H1 (cell line): ENCODE measurements at regions of chrX and their contacts with region 1.

Region 1: GRCh38 chrX:101287402-101287801 is 3.7 kb downstream of the TAF7L start:
- DNase-seq: no peak
- H3K4me3 ChIP-seq: no peak overlapping the region
- H3K27ac ChIP-seq: no peak overlapping the region
- H3K4me1 ChIP-seq: no peaks in the 10 kb centered on the region
- H3K27me3 ChIP-seq: no peaks in the 10 kb centered on the region
- CTCF ChIP-seq: peak in 2 of 3 experiments; percentile 23 to 44; a peak in 2 of 4 replicates
- EP300 ChIP-seq: no peak
- POLR2A ChIP-seq: no peak
- RAD21 ChIP-seq: peak; percentile 46 to 58

Region 2: DNA sequence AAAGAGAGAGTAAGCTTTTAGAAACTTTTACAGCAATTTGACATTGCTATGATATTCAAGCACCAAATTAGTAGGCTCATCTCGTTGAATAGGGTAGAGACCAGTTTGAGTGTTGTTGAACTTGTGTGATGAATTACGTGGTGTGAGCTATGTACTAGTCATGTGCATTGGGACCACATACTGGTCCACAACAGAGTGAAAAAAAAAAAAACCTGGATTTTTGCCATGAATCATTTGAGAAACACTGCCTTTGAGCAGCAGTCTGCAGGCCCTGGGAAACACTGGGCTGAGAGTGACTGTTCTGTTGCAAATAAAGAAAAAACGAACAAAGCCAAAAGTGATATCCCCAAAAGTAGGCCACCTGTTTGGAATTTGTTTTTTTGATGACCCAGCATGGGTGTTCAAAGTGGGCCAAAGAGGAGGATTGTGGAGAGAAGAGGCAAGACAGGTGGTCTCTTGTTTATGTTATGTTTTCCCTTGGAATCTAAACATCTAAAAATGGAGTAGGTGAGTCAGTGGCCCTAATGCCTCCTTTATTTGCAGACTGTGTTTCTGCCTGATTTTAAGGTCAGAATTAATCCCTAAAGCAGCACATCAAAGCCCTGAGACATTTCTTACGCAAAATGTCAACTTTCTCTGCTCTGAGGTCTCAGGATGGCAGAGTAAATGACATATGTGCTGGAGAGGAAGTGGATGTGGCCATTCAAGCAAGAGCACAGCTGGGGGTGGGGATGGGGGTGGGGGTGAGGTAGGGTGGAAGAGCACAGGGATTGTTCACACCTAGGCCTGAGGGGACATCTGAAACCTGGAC is 29.7 kb before region 1 on chrX:
- CTCF ChIA-PET with region 1: interaction called, 10 read pairs
- POLR2A ChIA-PET with region 1: no interaction called
- DNase-seq: no peak
- H3K4me3 ChIP-seq: no peak overlapping the region
- H3K27ac ChIP-seq: no peak overlapping the region
- H3K4me1 ChIP-seq: no peaks in the 10 kb centered on the region
- H3K27me3 ChIP-seq: no peaks in the 10 kb centered on the region
- CTCF ChIP-seq: no peak
- EP300 ChIP-seq: no peak
- POLR2A ChIP-seq: no peak
- RAD21 ChIP-seq: no peak